ENCODE measurements at regions of chr2 and their contacts with region 1.

Region 1: GRCh38 chr2:218568190-218569037 is at the starts of genes CNOT9 and USP37:
- DNase-seq: peak; percentile 100
- total RNA-seq, gene CNOT9: 20.9 TPM
- total RNA-seq, gene USP37: 7.1 TPM

Region 2: DNA sequence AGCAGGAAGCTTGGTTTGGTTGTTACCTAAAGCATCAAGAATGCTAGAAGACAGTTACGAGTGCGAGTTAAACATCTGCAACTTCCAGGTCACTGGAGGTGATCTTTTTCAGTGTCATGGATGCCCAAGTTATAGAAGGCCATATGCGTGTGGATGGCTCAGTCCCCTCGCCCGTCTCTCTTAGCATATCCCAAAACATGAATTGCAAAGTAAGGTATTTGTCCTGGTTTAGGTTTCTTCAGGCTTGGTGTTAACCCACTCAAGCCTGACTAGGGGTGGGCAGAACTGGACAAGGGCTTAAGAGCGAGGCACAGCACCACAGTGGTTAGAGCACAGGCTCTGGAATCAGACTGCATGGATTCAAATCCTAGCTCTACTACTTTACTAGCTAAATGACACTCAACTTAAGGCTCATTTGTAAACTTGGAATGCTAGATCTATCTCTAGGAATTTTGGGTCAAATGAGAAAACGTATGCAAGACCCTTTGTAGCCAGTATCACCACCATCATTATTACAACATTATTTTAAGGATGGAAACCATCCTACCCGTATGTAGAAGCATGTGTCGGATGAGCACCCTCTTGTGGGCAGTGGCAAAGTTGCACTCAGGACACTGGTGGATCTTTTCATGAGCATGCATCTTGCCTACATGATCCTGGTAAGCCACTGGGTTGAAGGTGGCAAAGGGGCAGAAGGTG is 79.8 kb after region 1 on chr2:
- intact Hi-C with region 1: loop called (anchors 5 kb)
- DNase-seq: no peak

Region 3: GRCh38 chr2:218659258-218659987 is 91.0 kb after region 1 on chr2 and contains the starts of genes BCS1L and ZNF142:
- intact Hi-C with region 1: no loop called
- DNase-seq: peak; percentile 97
- total RNA-seq, gene BCS1L: 36.1 TPM
- total RNA-seq, gene ZNF142: 21.3 TPM